HCT116 (cell line): ENCODE measurements at regions of chr1 and their contacts with region 1.

Region 1: DNA sequence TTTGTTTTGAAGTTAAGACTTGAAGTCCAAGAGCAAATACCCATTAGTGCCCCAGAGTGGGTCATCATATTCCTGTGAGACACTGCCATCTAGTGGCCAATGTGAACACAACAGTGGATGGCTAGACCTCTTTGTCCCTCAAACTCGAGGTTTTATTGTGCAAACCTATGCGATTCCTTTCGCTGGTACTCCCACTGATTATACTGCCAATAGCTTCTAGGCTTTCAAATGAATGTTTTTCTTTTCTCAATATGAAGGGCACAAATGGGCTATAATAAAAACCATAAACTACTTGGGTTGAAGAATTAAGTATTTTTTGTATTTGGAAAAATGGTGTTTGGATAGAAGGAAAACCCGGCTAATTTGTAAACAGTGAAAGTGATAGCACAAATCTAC is 100.4 kb upstream of the ZNF281 start:
- DNase-seq: peak; percentile 72
- ATAC-seq: peak; percentile 98
- H3K4me3 ChIP-seq: no peak overlapping the region
- H3K27ac ChIP-seq: no peak overlapping the region
- H3K4me1 ChIP-seq: no peaks in the 10 kb centered on the region
- H3K27me3 ChIP-seq: no peaks in the 10 kb centered on the region
- CTCF ChIP-seq: peak; percentile 77 to 95 (median 78)
- POLR2A ChIP-seq: no peak
- RAD21 ChIP-seq: peak; percentile 94

Region 2: GRCh38 chr1:198756470-198756869 is 1753.8 kb before region 1 on chr1:
- CTCF ChIA-PET with region 1: no interaction called
- POLR2A ChIA-PET with region 1: no interaction called
- RAD21 ChIA-PET with region 1: no interaction called
- intact Hi-C with region 1: loop called (anchors 10 kb)
- DNase-seq: no peak
- ATAC-seq: peak; percentile 50; the same call in 1 of the 2 replicates
- H3K4me3 ChIP-seq: no peak overlapping the region
- H3K27ac ChIP-seq: no peak overlapping the region
- H3K4me1 ChIP-seq: no peaks in the 10 kb centered on the region
- H3K27me3 ChIP-seq: no peaks in the 10 kb centered on the region
- CTCF ChIP-seq: peak in 1 of 3 experiments; percentile 7; a peak in 1 of 6 replicates
- POLR2A ChIP-seq: no peak
- RAD21 ChIP-seq: peak; percentile 50

Region 3: DNA sequence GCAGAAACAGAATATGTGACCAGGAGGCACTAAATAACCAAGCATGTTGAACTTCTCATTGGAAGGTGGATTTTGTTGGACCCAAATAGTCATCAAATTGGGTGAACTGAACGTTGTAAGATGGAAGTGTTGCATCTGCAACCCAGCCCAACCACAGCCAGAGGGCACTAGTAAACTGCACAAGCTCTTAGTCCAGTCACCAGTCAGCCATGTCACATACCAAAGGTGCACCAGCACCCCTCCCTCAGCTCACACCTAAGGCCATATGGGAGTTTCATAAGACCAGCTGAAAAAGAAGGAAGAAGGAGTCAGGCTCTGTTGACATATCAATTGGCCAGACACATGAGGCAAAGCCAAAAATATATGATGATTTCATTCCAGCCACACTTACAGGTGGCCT is 964.4 kb before region 1 on chr1:
- CTCF ChIA-PET with region 1: interaction called, 3 read pairs
- POLR2A ChIA-PET with region 1: no interaction called
- RAD21 ChIA-PET with region 1: no interaction called
- intact Hi-C with region 1: loop called (anchors 10 kb)
- DNase-seq: peak; percentile 26
- ATAC-seq: peak; percentile 85
- H3K4me3 ChIP-seq: no peak overlapping the region
- H3K27ac ChIP-seq: no peak overlapping the region
- H3K4me1 ChIP-seq: no peaks in the 10 kb centered on the region
- H3K27me3 ChIP-seq: no peaks in the 10 kb centered on the region
- CTCF ChIP-seq: peak; percentile 12 to 62 (median 55); a peak in 4 of 6 replicates
- POLR2A ChIP-seq: no peak
- RAD21 ChIP-seq: peak; percentile 65

Region 4: GRCh38 chr1:200139661-200140250 is 370.5 kb before region 1 on chr1:
- CTCF ChIA-PET with region 1: no interaction called
- POLR2A ChIA-PET with region 1: no interaction called
- RAD21 ChIA-PET with region 1: no interaction called
- intact Hi-C with region 1: loop called (anchors 1 kb)
- DNase-seq: peak; percentile 57
- ATAC-seq: peak; percentile 100
- H3K4me3 ChIP-seq: no peak overlapping the region
- H3K27ac ChIP-seq: no peak overlapping the region
- H3K4me1 ChIP-seq: no peaks in the 10 kb centered on the region
- H3K27me3 ChIP-seq: no peaks in the 10 kb centered on the region
- CTCF ChIP-seq: peak; percentile 64 to 80 (median 76); a peak in 5 of 6 replicates
- POLR2A ChIP-seq: no peak
- RAD21 ChIP-seq: peak; percentile 77

Region 5: GRCh38 chr1:200279810-200280411 is 230.3 kb before region 1 on chr1:
- CTCF ChIA-PET with region 1: interaction called, 6 read pairs
- POLR2A ChIA-PET with region 1: no interaction called
- RAD21 ChIA-PET with region 1: interaction called in 1 of 2 experiments, 4 read pairs
- intact Hi-C with region 1: loop called (anchors 1 kb)
- DNase-seq: peak; percentile 55
- ATAC-seq: peak; percentile 97
- H3K4me3 ChIP-seq: no peak overlapping the region
- H3K27ac ChIP-seq: no peak overlapping the region
- H3K4me1 ChIP-seq: no peaks in the 10 kb centered on the region
- H3K27me3 ChIP-seq: no peaks in the 10 kb centered on the region
- CTCF ChIP-seq: peak; percentile 69 to 88 (median 79)
- POLR2A ChIP-seq: no peak
- RAD21 ChIP-seq: peak; percentile 89

Region 6: DNA sequence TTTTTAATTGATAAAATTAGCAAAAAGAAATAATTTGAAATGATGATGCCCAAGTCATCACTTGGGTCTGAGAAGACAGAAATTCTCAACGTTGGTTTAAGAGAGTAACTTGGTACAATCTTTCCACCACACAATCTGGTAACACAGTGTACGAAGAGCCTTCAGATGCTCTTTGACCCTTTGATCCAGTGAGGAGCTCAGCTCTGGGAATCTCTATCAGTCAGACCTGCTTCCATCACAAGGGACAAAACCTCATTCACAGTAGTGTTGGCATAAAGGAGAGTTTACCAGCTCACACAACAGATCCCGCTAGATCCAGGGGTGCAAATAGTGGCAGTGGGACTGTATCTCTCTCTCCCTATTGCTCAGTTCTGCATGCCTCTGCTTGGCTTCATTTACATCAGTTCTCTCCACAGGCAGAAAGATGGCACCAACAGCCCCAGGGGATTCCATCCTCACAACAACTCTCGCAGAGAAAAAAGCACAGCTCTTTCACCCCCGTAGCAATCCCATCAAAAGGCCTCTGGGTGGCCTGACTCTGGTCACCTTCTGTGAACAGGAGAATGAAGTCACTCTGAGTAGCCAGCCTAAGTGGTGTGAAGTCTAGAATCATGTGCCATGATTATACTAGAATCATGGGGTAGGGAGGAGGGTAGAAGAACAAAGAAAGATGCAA is 220.1 kb before region 1 on chr1:
- CTCF ChIA-PET with region 1: no interaction called
- POLR2A ChIA-PET with region 1: no interaction called
- RAD21 ChIA-PET with region 1: no interaction called
- intact Hi-C with region 1: loop called (anchors 1 kb)
- DNase-seq: peak; percentile 37
- ATAC-seq: peak; percentile 94
- H3K4me3 ChIP-seq: no peak overlapping the region
- H3K27ac ChIP-seq: no peak overlapping the region
- H3K4me1 ChIP-seq: no peaks in the 10 kb centered on the region
- H3K27me3 ChIP-seq: no peaks in the 10 kb centered on the region
- CTCF ChIP-seq: peak; percentile 29 to 45 (median 35); a peak in 4 of 6 replicates
- POLR2A ChIP-seq: no peak
- RAD21 ChIP-seq: peak; percentile 26; the same call in 1 of the 2 replicates